Activated T-helper 2 cell treated with anti-CD3 and anti-CD28 coated beads, Interferon-gamma antibody, Interleukin-2, Interleukin-4, amounts not matched to agents 10 μg/mL and 5 μg/mL and 100 μg/mL, durations not matched to agents 14 hours and 24 hours and 36 hours (primary cell): ENCODE measurements at regions of chr4 and their contacts with region 1.

Region 1: DNA sequence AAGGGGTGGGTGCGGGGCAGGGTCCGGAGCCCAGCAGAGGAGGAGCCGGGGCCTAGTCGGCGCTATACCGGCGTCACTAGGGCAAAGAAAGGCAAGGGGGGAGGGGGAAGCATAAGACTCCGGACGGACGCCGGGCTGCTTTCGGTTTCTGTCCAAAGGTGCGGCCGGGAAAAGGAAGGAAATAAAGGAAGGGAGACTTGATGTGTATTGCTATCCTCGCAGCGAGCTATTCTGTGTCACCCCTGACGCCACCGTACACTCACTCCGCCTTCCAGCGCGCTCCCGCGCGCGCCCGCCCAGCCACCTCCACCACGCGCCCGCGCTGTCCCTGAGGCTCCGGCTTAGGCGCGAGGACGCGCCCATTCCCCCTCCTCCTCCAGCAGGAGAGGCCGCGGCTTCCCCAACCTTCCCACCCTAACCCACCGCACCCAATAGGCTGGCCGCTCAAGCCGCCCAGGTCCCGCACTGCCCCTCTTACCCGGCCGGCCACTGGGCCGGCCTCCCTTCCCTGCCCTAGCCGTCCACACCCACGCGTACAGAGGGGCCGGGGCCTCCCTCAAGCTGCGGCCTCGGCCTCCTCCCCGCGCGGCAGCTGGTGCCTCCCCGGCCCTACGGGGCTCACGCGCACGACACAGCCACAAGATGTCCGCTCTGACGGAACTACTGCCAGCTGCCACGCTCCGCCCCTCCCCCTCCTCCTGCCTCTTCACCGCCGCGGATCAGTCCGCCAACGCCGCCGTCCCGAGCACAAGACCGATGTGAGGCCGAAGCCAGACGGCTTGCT is at the start of gene UBE2D3:
- DNase-seq: peak; percentile 95
- H3K4me3 Mint-ChIP-seq: no peak within 1 kb of the TSS
- H3K27ac Mint-ChIP-seq: no peak within 1 kb of the TSS
- H3K4me1 Mint-ChIP-seq: peaks cover 32% of the 10 kb centered on the region
- H3K27me3 Mint-ChIP-seq: no peaks in the 10 kb centered on the region
- total RNA-seq, gene UBE2D3: 429 and 432 TPM in 2 replicates

Region 2: DNA sequence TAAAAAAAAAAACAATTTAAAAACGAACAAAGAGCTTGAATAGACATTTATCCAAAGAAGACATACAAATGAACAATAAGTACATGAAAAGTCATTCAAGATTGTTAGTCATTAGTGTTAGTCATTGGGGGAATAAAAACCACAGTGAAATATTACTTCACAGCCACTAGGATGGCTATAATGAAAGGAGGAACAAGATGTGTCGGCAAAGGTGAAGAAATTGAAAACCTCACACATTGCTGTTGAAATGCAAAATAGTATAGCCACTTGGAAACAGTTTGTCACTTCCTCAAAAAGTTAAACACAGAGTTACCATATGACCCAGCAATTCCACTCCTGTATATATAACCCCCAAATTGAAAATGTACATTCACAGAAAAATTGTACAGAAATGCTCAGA is 436.6 kb before region 1 on chr4:
- intact Hi-C with region 1: loop called (anchors 2 kb)
- DNase-seq: no peak
- H3K4me3 Mint-ChIP-seq: no peak overlapping the region
- H3K27ac Mint-ChIP-seq: peak overlapping the region; percentile 44
- H3K4me1 Mint-ChIP-seq: peaks cover 23% of the 10 kb centered on the region
- H3K27me3 Mint-ChIP-seq: peaks cover 10% of the 10 kb centered on the region

Region 3: DNA sequence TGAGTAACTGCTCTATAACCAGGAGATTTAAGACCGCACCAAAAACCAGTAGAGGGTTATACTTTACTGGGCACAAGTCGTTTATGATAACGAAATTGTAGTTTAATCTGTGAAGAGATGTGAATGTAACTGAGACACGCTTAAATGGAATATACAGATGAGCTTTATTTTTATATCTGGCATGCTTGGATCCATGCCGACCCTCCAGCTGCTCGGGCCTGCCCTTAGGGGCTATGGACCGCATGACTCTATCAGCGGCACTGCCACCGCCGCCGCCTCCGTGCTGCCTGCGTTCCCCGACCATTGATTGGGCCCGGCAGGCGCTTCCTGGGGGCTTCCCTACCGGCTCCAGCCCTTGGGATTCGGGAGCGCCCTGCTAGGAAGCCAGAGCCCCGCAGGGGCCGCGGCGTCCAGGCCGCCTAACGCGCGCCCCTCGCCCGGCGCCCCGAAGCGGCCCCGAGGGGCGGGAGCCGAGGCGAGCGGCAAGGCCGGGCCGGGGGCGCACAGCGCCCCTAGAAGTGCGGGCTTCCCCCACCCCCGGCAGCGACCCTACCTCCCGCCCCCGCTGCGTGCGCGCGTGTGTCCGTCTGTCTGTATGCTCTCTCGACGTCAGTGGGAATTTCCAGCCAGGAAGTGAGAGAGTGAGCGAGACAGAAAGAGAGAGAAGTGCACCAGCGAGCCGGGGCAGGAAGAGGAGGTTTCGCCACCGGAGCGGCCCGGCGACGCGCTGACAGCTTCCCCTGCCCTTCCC is 326.2 kb before region 1 on chr4 and contains the start of gene NFKB1:
- intact Hi-C with region 1: loop called (anchors 2 kb)
- DNase-seq: peak; percentile 74
- H3K4me3 Mint-ChIP-seq: peak within 1 kb of the TSS; percentile 96
- H3K27ac Mint-ChIP-seq: peak within 1 kb of the TSS; percentile 89
- H3K4me1 Mint-ChIP-seq: peaks cover 29% of the 10 kb centered on the region
- H3K27me3 Mint-ChIP-seq: no peaks in the 10 kb centered on the region
- total RNA-seq, gene NFKB1: 199 and 205 TPM in 2 replicates

Region 4: DNA sequence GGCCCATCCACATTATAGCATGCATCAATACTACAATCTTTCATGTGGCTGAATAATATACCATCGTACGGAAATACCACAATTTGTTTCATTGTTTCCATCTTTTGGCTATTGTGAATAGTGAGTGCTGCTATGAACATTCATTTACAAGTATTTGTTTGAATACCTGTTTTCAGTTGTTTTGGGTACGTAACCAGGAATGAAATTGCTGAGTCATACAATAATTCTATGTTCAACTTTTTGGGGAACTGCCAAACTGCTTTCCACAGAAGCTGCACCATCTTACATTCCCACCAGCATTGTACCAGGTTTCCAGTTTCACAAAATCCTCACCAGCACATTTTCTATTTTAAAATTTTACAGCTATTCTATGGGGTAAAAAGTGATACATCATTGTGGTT is 37.8 kb before region 1 on chr4:
- intact Hi-C with region 1: loop called (anchors 2 kb)
- DNase-seq: no peak
- H3K4me3 Mint-ChIP-seq: no peak overlapping the region
- H3K27ac Mint-ChIP-seq: no peak overlapping the region
- H3K4me1 Mint-ChIP-seq: peaks cover 26% of the 10 kb centered on the region
- H3K27me3 Mint-ChIP-seq: no peaks in the 10 kb centered on the region

Region 5: DNA sequence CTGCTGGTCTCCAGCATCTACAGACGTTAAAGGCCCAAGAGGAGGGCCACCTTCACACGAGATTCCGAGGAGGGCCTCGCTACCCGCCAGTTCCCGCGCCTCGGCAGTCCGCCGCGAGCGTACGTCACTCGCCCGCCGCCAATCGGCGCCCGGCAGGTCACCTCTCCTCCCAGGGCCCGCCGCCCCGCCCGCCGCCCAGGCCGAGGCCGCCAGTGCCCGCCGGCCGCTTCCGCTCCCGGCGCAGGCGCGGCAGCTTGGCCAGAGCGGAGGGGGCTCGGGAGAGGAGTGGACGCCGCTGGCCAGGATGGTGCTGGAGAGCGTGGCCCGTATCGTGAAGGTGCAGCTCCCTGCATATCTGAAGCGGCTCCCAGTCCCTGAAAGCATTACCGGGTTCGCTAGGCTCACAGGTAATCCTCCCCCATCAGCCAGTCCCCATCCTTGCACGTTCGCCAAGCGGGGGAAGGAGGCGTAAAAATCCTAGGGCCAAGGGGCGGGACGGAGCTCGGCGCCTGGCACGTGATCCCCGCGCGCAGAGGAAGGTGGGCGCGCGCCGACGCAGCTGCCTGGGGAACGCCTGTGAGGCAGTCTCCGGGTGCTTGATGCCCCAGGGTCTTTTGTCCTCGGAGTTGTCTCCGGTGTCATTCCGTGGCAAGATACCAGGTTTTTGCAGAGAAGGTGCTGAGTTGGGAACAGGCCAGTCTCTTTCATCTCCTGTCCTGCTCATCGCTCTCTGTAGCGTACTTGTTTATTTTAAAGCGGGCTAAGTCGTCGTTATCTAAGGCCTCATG is 41.9 kb after region 1 on chr4 and contains the start of gene CISD2:
- intact Hi-C with region 1: loop called (anchors 1 kb)
- DNase-seq: peak; percentile 93
- H3K4me3 Mint-ChIP-seq: peak within 1 kb of the TSS; percentile 90
- H3K27ac Mint-ChIP-seq: peak within 1 kb of the TSS; percentile 99
- H3K4me1 Mint-ChIP-seq: peaks cover 48% of the 10 kb centered on the region
- H3K27me3 Mint-ChIP-seq: no peaks in the 10 kb centered on the region
- total RNA-seq, gene CISD2: 50.8 and 51.4 TPM in 2 replicates

Region 6: DNA sequence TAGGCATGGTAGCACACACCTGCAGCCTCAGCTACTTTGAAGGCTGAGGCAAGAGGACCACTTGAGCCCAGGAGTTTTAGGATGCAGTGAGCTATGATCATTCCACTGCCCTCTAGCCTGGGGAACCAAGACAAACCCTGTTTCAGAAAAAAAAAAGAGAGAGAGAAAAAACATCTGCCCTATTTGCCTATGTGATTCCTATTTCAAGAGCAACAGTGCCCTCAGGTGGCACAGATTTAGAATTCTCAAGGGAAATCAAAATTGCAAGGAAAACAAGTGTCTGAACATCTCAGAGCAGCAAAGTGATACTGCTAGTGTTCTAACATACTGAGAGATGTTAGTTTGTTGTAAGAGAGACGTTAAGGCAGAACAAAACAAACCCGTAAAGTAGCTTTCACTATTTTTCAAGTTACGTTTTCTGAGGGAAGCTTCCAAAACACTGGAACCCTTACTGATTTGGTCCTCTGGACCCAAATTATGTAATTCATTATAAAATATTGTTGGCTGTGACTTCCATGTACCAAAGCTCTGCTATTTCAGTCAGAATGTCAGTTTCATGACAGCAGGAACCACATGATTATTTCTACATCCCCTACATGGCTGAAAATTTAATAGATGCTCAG is 264.6 kb after region 1 on chr4:
- intact Hi-C with region 1: loop called (anchors 5 kb)
- DNase-seq: peak; percentile 33
- H3K4me3 Mint-ChIP-seq: peak overlapping the region; percentile 54
- H3K27ac Mint-ChIP-seq: peak overlapping the region; percentile 65
- H3K4me1 Mint-ChIP-seq: peaks cover 24% of the 10 kb centered on the region
- H3K27me3 Mint-ChIP-seq: no peaks in the 10 kb centered on the region